ENCODE measurements at regions of chr3 and their contacts with region 1.

Region 1: GRCh38 chr3:114378760-114379159 is 84.9 kb downstream of the TIGIT start:
- DNase-seq: no peak
- ATAC-seq: no peak
- H3K4me3 ChIP-seq: no peak overlapping the region
- H3K27ac ChIP-seq: peak overlapping the region in 6 of 12 donors; percentile 7 to 75 (median 44)
- H3K4me1 ChIP-seq: peaks cover 3 to 85% (median 51%) of the 10 kb centered on the region in 12 donors
- H3K27me3 ChIP-seq: no peaks in the 10 kb centered on the region
- CTCF ChIP-seq: no peak
- POLR2A ChIP-seq: no peak

Region 2: DNA sequence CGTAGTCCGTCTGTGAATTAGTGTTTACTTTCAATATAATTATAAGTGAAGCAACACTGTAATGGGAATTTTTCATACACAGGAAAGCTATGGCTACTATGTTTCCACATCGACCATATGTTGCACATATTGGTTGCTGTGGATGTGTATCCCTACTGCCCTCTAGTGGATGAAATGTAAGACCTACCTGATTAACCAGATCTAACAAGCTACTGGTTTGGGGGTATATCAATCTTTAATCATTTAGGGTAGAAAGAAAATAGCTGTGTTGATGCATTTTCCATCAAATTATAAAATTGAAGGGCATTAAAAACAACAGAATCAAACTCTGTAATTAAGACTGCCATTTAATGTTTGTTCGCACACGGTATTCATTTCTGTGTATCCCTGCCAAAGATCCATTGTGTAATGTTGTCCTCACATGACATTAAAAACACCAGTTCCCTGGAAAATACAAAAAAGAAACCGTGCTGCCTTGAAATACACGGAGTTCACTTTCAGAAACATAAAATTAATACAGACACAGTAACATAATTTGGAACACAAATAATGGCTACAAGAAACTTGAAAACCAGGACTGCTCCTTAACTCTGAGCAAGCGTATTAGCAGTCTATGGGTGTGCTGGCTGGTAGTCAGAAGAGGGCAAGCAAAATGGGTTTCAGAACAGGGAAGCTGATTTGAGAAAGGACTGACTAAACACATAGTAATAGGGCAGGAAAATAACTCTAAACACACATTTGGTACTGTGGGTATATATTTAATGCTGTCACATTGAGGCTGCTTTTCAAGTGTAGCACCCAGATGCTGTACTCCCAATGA is 40.2 kb after region 1 on chr3:
- intact Hi-C with region 1: loop called in 8 of 10 experiments (anchors 2 to 5 kb)
- DNase-seq: no peak
- ATAC-seq: peak; percentile 53 to 84 (median 82)
- H3K4me3 ChIP-seq: peak overlapping the region in 6 of 12 donors; percentile 11 to 39 (median 34)
- H3K27ac ChIP-seq: peak overlapping the region in 11 of 12 donors; percentile 6 to 78 (median 52)
- H3K4me1 ChIP-seq: peaks cover 0 to 65% (median 29%) of the 10 kb centered on the region in 12 donors
- H3K27me3 ChIP-seq: no peaks in the 10 kb centered on the region
- CTCF ChIP-seq: peak; percentile 78 to 92 (median 89)
- POLR2A ChIP-seq: no peak

Measured in heart left ventricle (tissue), 16 donors.